Endothelial cell of umbilical vein (primary cell): ENCODE measurements at regions of chr4 and their contacts with region 1.

Region 1: GRCh38 chr4:112099701-112100297 is 45.5 kb upstream of the FAM241A start:
- DNase-seq: peak; percentile 80
- H3K4me3 ChIP-seq: no peak overlapping the region
- H3K27ac ChIP-seq: no peak overlapping the region
- H3K4me1 ChIP-seq: peaks cover 10% of the 10 kb centered on the region
- H3K27me3 ChIP-seq: no peaks in the 10 kb centered on the region
- CTCF ChIP-seq: peak; percentile 28 to 45
- POLR2A ChIP-seq: no peak

Region 2: GRCh38 chr4:112007391-112007790 is 92.4 kb before region 1 on chr4:
- CTCF ChIA-PET with region 1: no interaction called
- POLR2A ChIA-PET with region 1: no interaction called
- dilution Hi-C with region 1: no loop called
- intact Hi-C with region 1: no loop called
- DNase-seq: no peak
- H3K4me3 ChIP-seq: no peak overlapping the region
- H3K27ac ChIP-seq: no peak overlapping the region
- H3K4me1 ChIP-seq: no peaks in the 10 kb centered on the region
- H3K27me3 ChIP-seq: peaks cover 0 to 4% of the 10 kb centered on the region in 2 experiments
- CTCF ChIP-seq: no peak
- POLR2A ChIP-seq: no peak

Region 3: GRCh38 chr4:112075129-112075753 is 24.6 kb before region 1 on chr4:
- CTCF ChIA-PET with region 1: interaction called, 20 read pairs
- POLR2A ChIA-PET with region 1: no interaction called
- dilution Hi-C with region 1: no loop called
- intact Hi-C with region 1: loop called (anchors 1 kb)
- DNase-seq: peak; percentile 78
- H3K4me3 ChIP-seq: no peak overlapping the region
- H3K27ac ChIP-seq: no peak overlapping the region
- H3K4me1 ChIP-seq: no peaks in the 10 kb centered on the region
- H3K27me3 ChIP-seq: no peaks in the 10 kb centered on the region
- CTCF ChIP-seq: peak; percentile 62 to 71
- POLR2A ChIP-seq: no peak

Region 4: DNA sequence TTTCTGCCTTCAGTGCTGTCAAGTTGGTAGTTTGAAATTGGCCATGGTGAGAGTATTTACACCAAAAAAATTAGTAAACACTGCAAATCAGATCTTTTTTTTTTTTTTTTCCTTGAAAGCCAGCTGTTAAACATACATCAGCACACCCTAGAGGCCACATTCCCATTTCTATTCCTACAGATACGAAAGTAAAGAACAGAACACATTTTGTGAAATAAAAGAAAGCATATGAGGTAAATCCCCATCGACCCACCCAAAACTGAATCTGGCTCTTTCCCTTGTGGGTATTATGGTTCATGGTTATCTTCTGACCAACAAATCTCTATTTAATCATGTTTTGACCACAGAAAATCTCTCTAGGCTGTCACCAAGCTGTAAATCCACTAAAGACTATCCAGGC is 90.0 kb after region 1 on chr4:
- CTCF ChIA-PET with region 1: interaction called, 26 read pairs
- POLR2A ChIA-PET with region 1: no interaction called
- dilution Hi-C with region 1: no loop called
- intact Hi-C with region 1: loop called (anchors 5 kb)
- DNase-seq: peak; percentile 44
- H3K4me3 ChIP-seq: no peak overlapping the region
- H3K27ac ChIP-seq: no peak overlapping the region
- H3K4me1 ChIP-seq: no peaks in the 10 kb centered on the region
- H3K27me3 ChIP-seq: no peaks in the 10 kb centered on the region
- CTCF ChIP-seq: no peak
- POLR2A ChIP-seq: no peak

Region 5: GRCh38 chr4:112266821-112267220 is 167.0 kb after region 1 on chr4:
- CTCF ChIA-PET with region 1: interaction called, 44 read pairs
- POLR2A ChIA-PET with region 1: no interaction called
- dilution Hi-C with region 1: no loop called
- intact Hi-C with region 1: loop called (anchors 1 kb)
- DNase-seq: peak; percentile 50
- H3K4me3 ChIP-seq: no peak overlapping the region
- H3K27ac ChIP-seq: no peak overlapping the region
- H3K4me1 ChIP-seq: no peaks in the 10 kb centered on the region
- H3K27me3 ChIP-seq: no peaks in the 10 kb centered on the region
- CTCF ChIP-seq: peak; percentile 17 to 25
- POLR2A ChIP-seq: no peak

Region 6: DNA sequence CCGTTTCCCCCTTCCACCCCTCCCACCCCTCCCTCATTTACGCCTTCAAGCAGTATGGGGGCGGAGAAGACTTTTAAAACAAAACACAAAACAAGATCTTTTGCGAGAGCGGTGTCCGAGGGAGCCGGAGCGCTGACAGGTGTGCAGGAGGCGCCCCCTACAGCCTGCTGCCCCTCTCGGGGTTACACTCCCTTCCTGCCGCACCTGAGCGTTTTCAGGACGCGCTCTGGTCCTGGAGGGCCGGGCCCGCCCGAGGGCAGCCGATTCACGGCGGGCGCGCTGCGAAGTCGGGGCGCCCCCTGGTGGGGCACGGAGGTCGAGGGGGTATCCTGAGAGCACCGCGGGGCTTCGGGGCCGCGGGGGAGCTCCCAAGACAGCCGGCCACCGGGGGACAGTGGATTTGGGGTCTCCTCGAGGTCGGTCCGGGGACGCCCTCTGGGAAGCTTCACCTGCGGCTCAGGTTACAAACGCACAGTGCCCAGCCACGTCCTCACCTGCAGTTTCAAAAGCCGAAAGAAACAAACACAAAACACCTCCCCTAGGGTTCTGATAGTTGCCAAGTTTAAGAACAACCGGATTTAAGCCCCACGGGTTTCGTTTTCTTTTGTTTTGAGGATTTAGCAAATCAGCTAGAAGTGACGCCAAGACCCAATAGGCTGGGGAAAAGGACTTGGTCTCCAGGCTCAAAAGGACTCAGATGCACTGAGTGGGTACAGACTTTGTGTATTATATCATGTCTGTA is 424.1 kb after region 1 on chr4:
- CTCF ChIA-PET with region 1: interaction called, 17 read pairs
- POLR2A ChIA-PET with region 1: no interaction called
- dilution Hi-C with region 1: no loop called
- intact Hi-C with region 1: loop called (anchors 1 kb)
- DNase-seq: no peak
- H3K4me3 ChIP-seq: peak overlapping the region; percentile 1 to 56 (median 18)
- H3K27ac ChIP-seq: no peak overlapping the region
- H3K4me1 ChIP-seq: peaks cover 10% of the 10 kb centered on the region
- H3K27me3 ChIP-seq: peaks cover 62 to 82% of the 10 kb centered on the region in 2 experiments
- CTCF ChIP-seq: peak; percentile 72 to 79
- POLR2A ChIP-seq: no peak

Region 7: GRCh38 chr4:112648263-112649054 is 548.7 kb after region 1 on chr4:
- CTCF ChIA-PET with region 1: no interaction called
- POLR2A ChIA-PET with region 1: no interaction called
- dilution Hi-C with region 1: no loop called
- intact Hi-C with region 1: no loop called
- DNase-seq: no peak
- H3K4me3 ChIP-seq: no peak overlapping the region
- H3K27ac ChIP-seq: no peak overlapping the region
- H3K4me1 ChIP-seq: no peaks in the 10 kb centered on the region
- H3K27me3 ChIP-seq: no peaks in the 10 kb centered on the region
- CTCF ChIP-seq: no peak
- POLR2A ChIP-seq: no peak